ENCODE measurements at regions of chr20 and their contacts with region 1.

Region 1: GRCh38 chr20:24992487-24993205 is at the start of gene APMAP:
- DNase-seq: peak; percentile 97
- H3K4me3 Mint-ChIP-seq: peak within 1 kb of the TSS; percentile 95
- H3K27ac Mint-ChIP-seq: peak within 1 kb of the TSS; percentile 87
- H3K4me1 Mint-ChIP-seq: peaks cover 54% of the 10 kb centered on the region
- H3K27me3 Mint-ChIP-seq: no peaks in the 10 kb centered on the region
- total RNA-seq, gene APMAP: 45.5 to 46.6 TPM

Region 2: GRCh38 chr20:24838546-24839535 is 153.8 kb before region 1 on chr20:
- CTCF ChIA-PET with region 1: no interaction called
- POLR2A ChIA-PET with region 1: no interaction called
- intact Hi-C with region 1: no loop called
- DNase-seq: no peak
- H3K4me3 Mint-ChIP-seq: no peak overlapping the region
- H3K27ac Mint-ChIP-seq: no peak overlapping the region
- H3K4me1 Mint-ChIP-seq: no peaks in the 10 kb centered on the region
- H3K27me3 Mint-ChIP-seq: peaks cover 7% of the 10 kb centered on the region

Region 3: GRCh38 chr20:25022687-25023086 is 30.0 kb after region 1 on chr20:
- CTCF ChIA-PET with region 1: no interaction called
- POLR2A ChIA-PET with region 1: no interaction called
- intact Hi-C with region 1: no loop called
- DNase-seq: no peak
- H3K4me3 Mint-ChIP-seq: no peak overlapping the region
- H3K27ac Mint-ChIP-seq: no peak overlapping the region
- H3K4me1 Mint-ChIP-seq: no peaks in the 10 kb centered on the region
- H3K27me3 Mint-ChIP-seq: no peaks in the 10 kb centered on the region

Region 4: GRCh38 chr20:25057234-25058050 is 64.8 kb after region 1 on chr20:
- CTCF ChIA-PET with region 1: interaction called, 92 read pairs
- POLR2A ChIA-PET with region 1: interaction called, 5 read pairs
- intact Hi-C with region 1: loop called (anchors 1 kb)
- DNase-seq: peak; percentile 87
- H3K4me3 Mint-ChIP-seq: peak overlapping the region; percentile 79
- H3K27ac Mint-ChIP-seq: peak overlapping the region; percentile 79
- H3K4me1 Mint-ChIP-seq: peaks cover 47% of the 10 kb centered on the region
- H3K27me3 Mint-ChIP-seq: no peaks in the 10 kb centered on the region

Region 5: GRCh38 chr20:25178563-25179438 is 186.2 kb after region 1 on chr20:
- CTCF ChIA-PET with region 1: interaction called, 15 read pairs
- POLR2A ChIA-PET with region 1: no interaction called
- intact Hi-C with region 1: loop called (anchors 1 kb)
- DNase-seq: peak; percentile 20
- H3K4me3 Mint-ChIP-seq: no peak overlapping the region
- H3K27ac Mint-ChIP-seq: no peak overlapping the region
- H3K4me1 Mint-ChIP-seq: no peaks in the 10 kb centered on the region
- H3K27me3 Mint-ChIP-seq: peaks cover 5% of the 10 kb centered on the region

Region 6: DNA sequence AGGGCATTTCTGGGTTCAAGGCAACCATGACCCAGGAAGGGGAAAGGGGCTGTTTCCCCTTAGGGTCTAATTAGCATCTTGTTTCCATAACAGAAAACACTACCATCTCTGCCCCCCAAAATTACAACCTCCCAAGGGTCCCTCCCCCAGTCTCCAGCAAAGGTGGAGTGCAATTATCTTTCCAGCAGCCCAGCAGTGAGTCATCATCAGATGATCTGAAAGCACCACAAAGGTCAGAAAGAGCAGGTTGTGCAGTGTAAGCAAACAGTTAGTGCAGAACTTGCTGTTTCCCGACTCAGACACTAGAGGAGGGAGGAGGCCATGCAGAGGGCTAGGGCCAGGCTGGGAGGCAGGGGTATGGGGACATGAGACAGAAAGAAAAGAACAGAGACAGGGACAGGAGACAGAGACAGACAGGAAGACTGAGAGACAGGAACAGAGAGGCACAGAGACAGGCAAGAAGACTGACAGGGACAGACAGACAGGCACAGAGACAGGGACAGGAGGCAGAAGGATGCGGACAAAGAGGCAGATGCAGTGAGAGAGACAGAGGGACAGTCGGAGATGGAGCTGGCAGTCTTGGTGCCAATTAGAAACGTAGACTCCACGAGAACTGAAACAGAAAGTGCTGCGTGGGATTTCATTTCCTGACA is 317.7 kb after region 1 on chr20:
- CTCF ChIA-PET with region 1: interaction called, 3 read pairs
- POLR2A ChIA-PET with region 1: no interaction called
- intact Hi-C with region 1: loop called (anchors 10 kb)
- DNase-seq: peak; percentile 79
- H3K4me3 Mint-ChIP-seq: peak overlapping the region; percentile 61
- H3K27ac Mint-ChIP-seq: peak overlapping the region; percentile 89
- H3K4me1 Mint-ChIP-seq: peaks cover 31% of the 10 kb centered on the region
- H3K27me3 Mint-ChIP-seq: no peaks in the 10 kb centered on the region

Region 7: GRCh38 chr20:25407311-25408169 is 414.9 kb after region 1 on chr20 and contains the start of gene GINS1:
- CTCF ChIA-PET with region 1: interaction called, 3 read pairs
- POLR2A ChIA-PET with region 1: no interaction called
- intact Hi-C with region 1: loop called (anchors 2 kb)
- DNase-seq: peak; percentile 92
- H3K4me3 Mint-ChIP-seq: peak within 1 kb of the TSS; percentile 88
- H3K27ac Mint-ChIP-seq: peak within 1 kb of the TSS; percentile 85
- H3K4me1 Mint-ChIP-seq: peaks cover 17% of the 10 kb centered on the region
- H3K27me3 Mint-ChIP-seq: no peaks in the 10 kb centered on the region
- total RNA-seq, gene GINS1: 31.5 to 32.3 TPM

Measured in activated CD4-positive, alpha-beta memory T cell treated with anti-CD3 and anti-CD28 coated beads for 36 hours (primary cell).